CD8-positive, alpha-beta T cell (primary cell): ENCODE measurements at regions of chr19 and their contacts with region 1.

Region 1: GRCh38 chr19:49451430-49452181 is at the start of gene PIH1D1:
- DNase-seq: peak; percentile 86 to 99 (median 94)
- ATAC-seq: peak; percentile 66
- H3K4me3 ChIP-seq: peak within 1 kb of the TSS; percentile 87 to 94
- H3K4me3 Mint-ChIP-seq: peak within 1 kb of the TSS; percentile 99
- H3K27ac ChIP-seq: peak within 1 kb of the TSS; percentile 89 to 96
- H3K27ac Mint-ChIP-seq: peak within 1 kb of the TSS; percentile 99
- H3K4me1 ChIP-seq: peaks cover 31% of the 10 kb centered on the region
- H3K4me1 Mint-ChIP-seq: peaks cover 50% of the 10 kb centered on the region
- H3K27me3 ChIP-seq: no peaks in the 10 kb centered on the region
- H3K27me3 Mint-ChIP-seq: no peaks in the 10 kb centered on the region
- CTCF ChIP-seq: no peak
- total RNA-seq, gene PIH1D1: 113 to 119 TPM

Region 2: DNA sequence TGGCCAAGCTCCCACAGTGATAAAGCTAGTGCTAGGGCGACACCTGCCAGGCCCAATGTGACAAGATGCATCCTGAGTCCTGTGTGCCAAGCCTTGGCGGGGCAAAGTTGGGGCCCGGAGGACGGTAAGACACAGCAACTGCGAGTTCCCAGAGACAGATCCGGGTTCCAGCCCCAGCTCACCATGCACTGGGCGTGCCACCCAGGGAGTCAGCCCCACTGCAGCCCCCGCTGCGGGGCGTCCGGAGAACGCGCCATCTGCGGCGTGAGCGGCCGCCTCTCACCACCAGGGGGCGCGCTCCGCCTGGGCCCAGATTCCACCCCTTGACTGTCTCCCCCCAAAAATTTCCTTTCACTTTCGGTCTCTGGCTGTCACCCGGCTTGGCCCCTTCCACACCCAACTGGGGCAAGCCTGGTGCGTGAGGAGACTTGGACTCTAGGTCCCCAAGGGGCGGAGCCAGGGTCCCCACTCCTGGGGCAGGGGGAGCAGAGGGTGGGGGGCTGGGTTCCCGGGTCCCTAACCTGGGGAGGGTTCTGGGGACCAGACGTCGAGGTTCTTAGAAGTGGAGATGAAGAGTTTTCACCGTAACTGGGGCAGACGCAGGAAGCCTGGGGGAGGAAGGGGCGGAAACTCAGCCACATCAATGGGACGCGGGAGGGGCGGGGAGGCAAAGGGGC is 22.4 kb after region 1 on chr19 and contains the start of gene FLT3LG:
- CTCF ChIA-PET with region 1: interaction called, 25 read pairs
- POLR2A ChIA-PET with region 1: interaction called, 52 read pairs
- intact Hi-C with region 1: loop called (anchors 1 kb)
- DNase-seq: peak; percentile 83 to 97 (median 91)
- ATAC-seq: peak; percentile 58
- H3K4me3 ChIP-seq: peak within 1 kb of the TSS; percentile 88 to 98
- H3K4me3 Mint-ChIP-seq: peak within 1 kb of the TSS; percentile 91
- H3K27ac ChIP-seq: peak within 1 kb of the TSS; percentile 92 to 96
- H3K27ac Mint-ChIP-seq: peak within 1 kb of the TSS; percentile 98
- H3K4me1 ChIP-seq: peaks cover 53% of the 10 kb centered on the region
- H3K4me1 Mint-ChIP-seq: peaks cover 54% of the 10 kb centered on the region
- H3K27me3 ChIP-seq: no peaks in the 10 kb centered on the region
- H3K27me3 Mint-ChIP-seq: no peaks in the 10 kb centered on the region
- CTCF ChIP-seq: peak; percentile 83
- total RNA-seq, gene FLT3LG: 246 to 259 TPM

Region 3: DNA sequence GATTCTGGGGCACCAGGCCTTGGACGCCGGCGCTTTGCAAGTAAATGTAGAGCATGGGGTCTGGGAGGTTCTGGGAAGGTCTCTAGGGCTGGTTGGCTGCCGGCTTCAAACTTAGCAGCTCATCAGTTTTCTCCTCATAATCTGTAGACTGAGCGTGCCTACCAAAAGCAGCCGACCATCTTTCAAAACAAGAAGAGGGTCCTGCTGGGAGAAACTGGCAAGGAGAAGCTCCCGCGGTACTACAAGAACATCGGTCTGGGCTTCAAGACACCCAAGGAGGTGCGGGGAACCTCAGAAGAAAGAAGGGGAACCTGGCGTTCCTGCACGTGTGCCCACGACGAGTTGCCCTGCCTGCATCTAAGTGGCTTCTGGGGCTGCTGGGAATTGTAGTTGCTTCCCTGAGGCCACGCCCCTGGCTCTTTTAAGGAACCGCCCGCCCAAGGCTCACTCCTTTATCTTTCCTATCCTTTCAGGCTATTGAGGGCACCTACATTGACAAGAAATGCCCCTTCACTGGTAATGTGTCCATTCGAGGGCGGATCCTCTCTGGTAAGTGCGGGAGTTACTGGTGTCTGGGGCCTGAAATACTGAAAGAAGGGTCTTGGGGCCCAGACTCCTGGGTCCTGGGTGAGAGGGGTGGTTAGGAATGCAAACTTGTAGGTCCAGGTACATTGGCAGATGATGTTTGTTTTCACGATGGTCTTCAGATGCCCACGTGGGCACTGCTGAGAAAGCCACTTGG is 45.6 kb after region 1 on chr19:
- CTCF ChIA-PET with region 1: interaction called, 3 read pairs
- POLR2A ChIA-PET with region 1: interaction called, 16 read pairs
- intact Hi-C with region 1: loop called (anchors 1 kb)
- DNase-seq: peak; percentile 54 to 91 (median 78)
- ATAC-seq: peak; percentile 9
- H3K4me3 ChIP-seq: peak overlapping the region; percentile 95 to 96
- H3K4me3 Mint-ChIP-seq: peak overlapping the region; percentile 100
- H3K27ac ChIP-seq: peak overlapping the region; percentile 95 to 98
- H3K27ac Mint-ChIP-seq: peak overlapping the region; percentile 98
- H3K4me1 ChIP-seq: peaks cover 39% of the 10 kb centered on the region
- H3K4me1 Mint-ChIP-seq: peaks cover 59% of the 10 kb centered on the region
- H3K27me3 ChIP-seq: no peaks in the 10 kb centered on the region
- H3K27me3 Mint-ChIP-seq: no peaks in the 10 kb centered on the region
- CTCF ChIP-seq: no peak

Region 4: GRCh38 chr19:49590071-49590970 is 138.7 kb after region 1 on chr19:
- CTCF ChIA-PET with region 1: no interaction called
- POLR2A ChIA-PET with region 1: no interaction called
- intact Hi-C with region 1: loop called in 1 of 2 experiments (anchors 5 kb)
- DNase-seq: peak; percentile 90 to 98 (median 94)
- ATAC-seq: peak; percentile 77
- H3K4me3 ChIP-seq: peak overlapping the region; percentile 78 to 97
- H3K4me3 Mint-ChIP-seq: peak overlapping the region; percentile 91
- H3K27ac ChIP-seq: peak overlapping the region; percentile 82 to 83
- H3K27ac Mint-ChIP-seq: peak overlapping the region; percentile 91
- H3K4me1 ChIP-seq: peaks cover 23% of the 10 kb centered on the region
- H3K4me1 Mint-ChIP-seq: peaks cover 36% of the 10 kb centered on the region
- H3K27me3 ChIP-seq: no peaks in the 10 kb centered on the region
- H3K27me3 Mint-ChIP-seq: no peaks in the 10 kb centered on the region
- CTCF ChIP-seq: peak; percentile 29

Region 5: GRCh38 chr19:49766007-49766937 is 314.7 kb after region 1 on chr19:
- CTCF ChIA-PET with region 1: no interaction called
- POLR2A ChIA-PET with region 1: no interaction called
- intact Hi-C with region 1: loop called in 1 of 2 experiments (anchors 2 kb)
- DNase-seq: peak; percentile 97 to 100 (median 99)
- ATAC-seq: peak; percentile 87
- H3K4me3 ChIP-seq: peak overlapping the region; percentile 62 to 76
- H3K4me3 Mint-ChIP-seq: peak overlapping the region; percentile 82
- H3K27ac ChIP-seq: peak overlapping the region; percentile 66 to 87
- H3K27ac Mint-ChIP-seq: peak overlapping the region; percentile 93
- H3K4me1 ChIP-seq: peaks cover 24% of the 10 kb centered on the region
- H3K4me1 Mint-ChIP-seq: peaks cover 38% of the 10 kb centered on the region
- H3K27me3 ChIP-seq: no peaks in the 10 kb centered on the region
- H3K27me3 Mint-ChIP-seq: no peaks in the 10 kb centered on the region
- CTCF ChIP-seq: no peak